ENCODE measurements at regions of chr11 and their contacts with region 1.

Region 1: DNA sequence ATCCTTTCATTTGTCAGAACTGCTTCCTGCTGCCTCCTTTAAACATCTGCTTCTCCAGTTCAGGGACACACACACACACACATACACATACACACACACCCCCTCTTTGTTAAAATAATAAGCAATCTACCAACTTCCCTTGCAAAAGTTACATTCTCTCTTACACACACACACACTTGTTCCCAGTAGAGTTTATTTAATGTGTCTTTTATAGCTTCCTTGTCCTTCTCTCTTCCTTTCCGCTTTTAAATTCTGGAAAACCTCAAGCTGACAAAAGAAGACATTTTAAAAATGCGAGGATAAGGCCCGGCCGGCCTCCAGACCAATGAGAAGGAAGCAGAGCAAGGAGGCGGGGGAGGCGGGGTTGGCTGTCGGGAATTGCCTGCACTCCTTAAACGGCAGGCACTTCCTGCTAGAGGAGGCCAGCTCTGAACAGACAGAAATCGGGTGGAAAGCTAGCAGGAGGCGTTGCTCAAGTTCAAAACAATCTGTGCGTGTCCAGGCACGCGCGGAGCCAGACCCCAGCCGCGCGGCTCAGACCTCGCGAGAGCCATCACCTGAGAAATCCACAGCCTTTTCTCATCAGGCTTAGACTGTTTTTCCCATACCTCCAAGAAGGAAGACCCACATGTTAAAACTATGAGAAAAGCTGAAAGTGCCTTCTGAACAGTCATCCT is 99.9 kb downstream of the MAML2 start:
- DNase-seq: peak; percentile 92 to 96 (median 93)
- ATAC-seq: peak; percentile 96
- H3K4me3 ChIP-seq: peak overlapping the region; percentile 39
- H3K27ac ChIP-seq: peak overlapping the region; percentile 78
- H3K4me1 ChIP-seq: peaks cover 5 to 35% of the 10 kb centered on the region in 2 experiments; a peak in 4 of 5 replicates
- H3K27me3 ChIP-seq: no peaks in the 10 kb centered on the region
- CTCF ChIP-seq: no peak
- EP300 ChIP-seq: peak; percentile 58
- POLR2A ChIP-seq: peak; percentile 81; the same call in 1 of the 2 replicates
- RAD21 ChIP-seq: 0 out of 4 replicates have a peak, but pooled peaks of 1 of the 2 experiments have one; percentile 25

Region 2: DNA sequence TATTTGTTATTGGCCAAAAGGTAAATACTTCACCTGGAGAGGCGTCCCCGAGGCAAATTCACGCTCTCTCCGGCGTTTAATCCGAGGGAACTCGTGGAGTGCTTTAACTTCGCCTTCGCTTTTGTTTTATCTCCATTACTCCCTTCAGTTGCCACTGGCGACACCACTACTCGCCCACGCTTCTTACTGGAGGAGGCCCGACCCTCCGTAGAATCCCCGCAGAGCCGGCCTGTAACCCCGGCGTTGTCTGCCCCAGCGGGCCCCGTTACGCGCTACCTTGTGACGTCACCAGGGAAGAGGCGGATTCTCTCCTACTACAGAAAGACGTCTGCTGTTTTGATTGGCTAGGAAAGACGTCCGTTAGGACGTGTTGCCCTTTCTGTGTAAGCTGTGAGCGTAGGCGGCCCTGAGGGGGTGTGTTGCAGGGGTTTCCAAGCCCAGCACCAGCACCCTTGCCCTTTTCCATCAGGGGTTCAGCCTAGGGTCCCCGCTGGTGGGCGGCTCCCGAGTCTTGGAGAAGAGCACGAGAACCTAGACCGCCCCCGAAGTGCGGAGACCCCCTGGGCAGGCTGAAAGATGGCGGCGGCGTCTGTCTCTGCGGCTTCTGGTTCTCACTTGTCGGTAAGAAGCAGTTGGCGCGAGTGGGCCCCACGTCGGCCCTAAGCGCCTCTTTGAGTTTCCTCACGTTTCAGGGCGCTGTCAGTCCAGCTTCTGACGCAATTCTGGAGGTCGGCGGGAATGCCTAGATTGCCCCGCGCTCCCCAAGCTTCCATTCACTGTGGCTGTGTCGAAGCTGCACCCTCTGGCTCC is 452.8 kb before region 1 on chr11 and contains the start of gene CEP57:
- CTCF ChIA-PET with region 1: no interaction called
- POLR2A ChIA-PET with region 1: no interaction called
- in situ Hi-C with region 1: no loop called
- intact Hi-C with region 1: loop called (anchors 5 kb)
- DNase-seq: peak; percentile 87 to 99 (median 90)
- ATAC-seq: peak; percentile 80
- H3K4me3 ChIP-seq: peak within 1 kb of the TSS; percentile 88
- H3K27ac ChIP-seq: peak within 1 kb of the TSS; percentile 99
- H3K4me1 ChIP-seq: peaks cover 4 to 14% of the 10 kb centered on the region in 2 experiments; a peak in 4 of 5 replicates
- H3K27me3 ChIP-seq: no peaks in the 10 kb centered on the region
- CTCF ChIP-seq: no peak
- EP300 ChIP-seq: no peak
- POLR2A ChIP-seq: peak; percentile 92
- RAD21 ChIP-seq: no peak
- polyA plus RNA-seq, gene CEP57: 25.1 to 33.9 TPM

Region 3: DNA sequence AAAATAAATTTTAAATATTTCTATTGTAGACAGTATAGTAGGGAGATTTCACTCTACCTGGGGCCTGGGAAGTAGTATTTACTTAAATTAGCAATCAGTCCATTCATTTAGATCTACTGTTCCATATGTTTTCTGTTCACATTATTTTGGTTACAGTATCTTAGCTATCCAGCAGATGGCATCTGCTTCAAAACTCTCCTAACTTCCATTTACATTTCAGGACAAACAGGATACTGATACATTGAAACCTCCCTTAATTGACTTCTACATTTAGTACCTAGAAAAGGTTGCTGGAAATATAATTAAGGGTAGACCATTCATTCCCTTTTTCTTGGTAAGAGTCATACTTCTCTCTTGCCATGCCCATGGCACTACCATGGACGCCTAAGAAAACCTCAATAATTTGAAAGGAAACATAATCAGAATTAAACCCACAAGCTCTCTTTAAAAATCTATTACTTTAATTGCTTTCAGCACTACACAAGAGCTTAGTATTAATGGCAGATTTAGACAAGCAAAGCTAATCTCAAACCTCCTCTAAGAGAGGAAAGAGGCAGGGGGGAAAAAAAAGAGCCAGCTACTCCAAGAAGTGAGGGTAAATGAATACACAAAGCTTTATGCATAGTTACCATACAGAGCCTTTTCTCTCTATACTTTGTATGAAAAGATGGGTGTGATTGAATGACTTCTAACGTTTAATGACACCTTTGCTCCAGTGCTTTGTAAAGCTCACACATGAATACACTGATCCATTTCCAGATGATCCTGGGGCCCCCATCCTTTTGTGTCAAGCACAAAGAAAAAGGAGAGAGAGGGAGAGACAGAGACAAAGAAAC is 188.0 kb before region 1 on chr11:
- CTCF ChIA-PET with region 1: no interaction called
- POLR2A ChIA-PET with region 1: no interaction called
- in situ Hi-C with region 1: no loop called
- intact Hi-C with region 1: loop called (anchors 5 kb)
- DNase-seq: peak; percentile 28 to 43 (median 32)
- ATAC-seq: peak; percentile 88
- H3K4me3 ChIP-seq: no peak overlapping the region
- H3K27ac ChIP-seq: no peak overlapping the region
- H3K4me1 ChIP-seq: no peaks in the 10 kb centered on the region; a peak in 1 of 5 replicates
- H3K27me3 ChIP-seq: no peaks in the 10 kb centered on the region
- CTCF ChIP-seq: peak; percentile 45 to 75 (median 57); a peak in 4 of 6 replicates
- EP300 ChIP-seq: no peak
- POLR2A ChIP-seq: no peak
- RAD21 ChIP-seq: peak; percentile 82 to 92

Region 4: GRCh38 chr11:96084610-96085318 is 158.3 kb before region 1 on chr11:
- CTCF ChIA-PET with region 1: no interaction called
- POLR2A ChIA-PET with region 1: no interaction called
- in situ Hi-C with region 1: no loop called
- intact Hi-C with region 1: loop called (anchors 5 kb)
- DNase-seq: no peak
- ATAC-seq: no peak
- H3K4me3 ChIP-seq: no peak overlapping the region
- H3K27ac ChIP-seq: no peak overlapping the region
- H3K4me1 ChIP-seq: peaks cover 3 to 60% of the 10 kb centered on the region in 2 experiments
- H3K27me3 ChIP-seq: no peaks in the 10 kb centered on the region
- CTCF ChIP-seq: no peak
- EP300 ChIP-seq: no peak
- POLR2A ChIP-seq: no peak
- RAD21 ChIP-seq: no peak

Region 5: DNA sequence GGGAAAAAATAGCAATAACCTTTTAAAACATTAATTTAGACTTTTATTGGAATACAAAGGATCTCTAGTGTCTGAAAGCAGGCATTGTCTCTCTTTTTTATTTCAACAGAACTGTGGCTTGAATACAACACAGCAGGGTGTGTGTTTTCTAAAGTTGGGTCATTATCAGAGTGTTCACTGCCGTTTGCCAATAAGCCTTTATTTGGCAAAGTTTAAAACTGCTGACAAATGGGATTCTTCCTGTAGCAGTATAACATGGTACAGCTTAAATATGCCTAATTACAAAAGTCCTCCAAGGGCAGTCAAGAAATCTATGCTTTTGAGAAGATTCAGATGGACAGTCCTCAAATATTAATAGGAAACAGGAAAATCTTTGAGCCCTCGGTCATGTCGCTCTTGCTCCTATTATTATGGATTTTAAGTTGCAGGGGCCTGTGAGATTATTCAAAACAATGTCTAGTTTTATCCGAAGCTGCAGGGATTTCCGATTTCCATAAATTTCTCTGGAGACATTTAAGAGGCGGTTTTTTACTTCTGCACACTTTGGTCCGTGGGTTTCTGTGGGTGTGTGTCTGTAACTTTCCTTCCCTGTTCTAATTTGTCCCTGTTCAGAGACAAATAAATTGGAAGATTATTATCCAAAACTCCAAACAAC is 100.0 kb before region 1 on chr11:
- CTCF ChIA-PET with region 1: no interaction called
- POLR2A ChIA-PET with region 1: no interaction called
- in situ Hi-C with region 1: no loop called
- intact Hi-C with region 1: no loop called
- DNase-seq: no peak
- ATAC-seq: no peak
- H3K4me3 ChIP-seq: no peak overlapping the region
- H3K27ac ChIP-seq: no peak overlapping the region
- H3K4me1 ChIP-seq: peaks cover 0 to 5% of the 10 kb centered on the region in 2 experiments; a peak in 1 of 5 replicates
- H3K27me3 ChIP-seq: no peaks in the 10 kb centered on the region
- CTCF ChIP-seq: no peak
- EP300 ChIP-seq: no peak
- POLR2A ChIP-seq: no peak
- RAD21 ChIP-seq: no peak

Region 6: DNA sequence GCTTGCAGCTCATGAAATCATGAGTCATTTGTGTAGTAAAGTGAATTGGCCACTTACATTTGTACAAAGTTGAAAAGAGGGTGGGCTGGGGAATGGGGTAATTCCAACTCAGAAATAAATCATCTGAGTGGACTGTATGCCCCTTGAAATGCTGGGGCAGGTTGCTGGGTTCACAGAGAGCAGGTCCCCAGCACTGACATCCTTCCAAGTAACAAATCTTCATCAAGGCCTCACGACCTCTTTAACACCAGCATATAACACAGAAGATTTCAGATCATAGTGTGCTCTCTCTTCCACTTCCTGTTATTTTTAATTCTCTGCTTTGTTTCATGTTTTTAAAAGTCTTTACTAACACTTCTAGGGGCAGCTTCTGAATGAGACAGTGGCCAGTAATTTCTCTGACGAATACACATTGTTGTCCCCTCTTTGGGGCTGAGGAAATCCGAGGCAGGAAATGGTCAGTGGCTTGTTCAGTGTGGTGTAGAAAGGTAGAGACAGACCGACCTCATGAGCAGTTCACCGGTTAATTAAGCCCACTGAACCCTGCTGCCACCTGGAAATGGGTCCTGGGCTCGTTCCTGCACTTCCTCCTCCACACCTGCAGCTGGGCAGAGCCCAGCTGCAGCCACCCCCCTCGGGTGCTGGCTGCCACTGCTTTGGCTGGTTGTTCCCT is 27.9 kb before region 1 on chr11:
- CTCF ChIA-PET with region 1: no interaction called
- POLR2A ChIA-PET with region 1: interaction called, 4 read pairs
- in situ Hi-C with region 1: no loop called
- intact Hi-C with region 1: loop called (anchors 1 kb)
- DNase-seq: peak in 2 of 4 experiments; percentile 16 to 20
- ATAC-seq: peak; percentile 22
- H3K4me3 ChIP-seq: no peak overlapping the region
- H3K27ac ChIP-seq: peak overlapping the region; percentile 50
- H3K4me1 ChIP-seq: peaks cover 9 to 63% of the 10 kb centered on the region in 2 experiments
- H3K27me3 ChIP-seq: no peaks in the 10 kb centered on the region
- CTCF ChIP-seq: no peak
- EP300 ChIP-seq: no peak
- POLR2A ChIP-seq: no peak
- RAD21 ChIP-seq: no peak

Region 7: GRCh38 chr11:96324960-96325359 is 81.9 kb after region 1 on chr11:
- CTCF ChIA-PET with region 1: no interaction called
- POLR2A ChIA-PET with region 1: interaction called, 3 read pairs
- in situ Hi-C with region 1: no loop called
- intact Hi-C with region 1: loop called (anchors 5 kb)
- DNase-seq: no peak
- ATAC-seq: no peak
- H3K4me3 ChIP-seq: no peak overlapping the region
- H3K27ac ChIP-seq: peak overlapping the region; percentile 52; the same call in 2 of the 3 replicates
- H3K4me1 ChIP-seq: peaks cover 18 to 73% of the 10 kb centered on the region in 2 experiments; a peak in 4 of 5 replicates
- H3K27me3 ChIP-seq: no peaks in the 10 kb centered on the region
- CTCF ChIP-seq: no peak
- EP300 ChIP-seq: no peak
- POLR2A ChIP-seq: no peak
- RAD21 ChIP-seq: no peak

Region 8: GRCh38 chr11:96389720-96390487 is 146.8 kb after region 1 on chr11 and contains the starts of genes CCDC82 and JRKL:
- CTCF ChIA-PET with region 1: no interaction called
- POLR2A ChIA-PET with region 1: no interaction called
- in situ Hi-C with region 1: no loop called
- intact Hi-C with region 1: loop called (anchors 5 kb)
- DNase-seq: peak; percentile 97 to 98 (median 98)
- ATAC-seq: peak; percentile 97
- H3K4me3 ChIP-seq: peak within 1 kb of the TSS; percentile 67
- H3K27ac ChIP-seq: peak within 1 kb of the TSS; percentile 87
- H3K4me1 ChIP-seq: peaks cover 0 to 4% of the 10 kb centered on the region in 2 experiments; a peak in 1 of 5 replicates
- H3K27me3 ChIP-seq: no peaks in the 10 kb centered on the region
- CTCF ChIP-seq: peak in 1 of 3 experiments; percentile 15; a peak in 1 of 6 replicates
- EP300 ChIP-seq: no peak; the same call in 1 of the 2 replicates
- POLR2A ChIP-seq: peak; percentile 91
- RAD21 ChIP-seq: 0 out of 4 replicates have a peak, but pooled peaks of 1 of the 2 experiments have one; percentile 12
- polyA plus RNA-seq, gene CCDC82: 23.7 to 24.7 TPM
- polyA plus RNA-seq, gene JRKL: 4.8 to 6.8 TPM

Measured in K562 (cell line).